ENCODE measurements at regions of chr3 and their contacts with region 1.

Region 1: GRCh38 chr3:182238126-182238525 is 526.4 kb downstream of the SOX2 start:
- DNase-seq: peak; percentile 37
- H3K4me3 ChIP-seq: no peak overlapping the region
- CTCF ChIP-seq: no peak

Region 2: DNA sequence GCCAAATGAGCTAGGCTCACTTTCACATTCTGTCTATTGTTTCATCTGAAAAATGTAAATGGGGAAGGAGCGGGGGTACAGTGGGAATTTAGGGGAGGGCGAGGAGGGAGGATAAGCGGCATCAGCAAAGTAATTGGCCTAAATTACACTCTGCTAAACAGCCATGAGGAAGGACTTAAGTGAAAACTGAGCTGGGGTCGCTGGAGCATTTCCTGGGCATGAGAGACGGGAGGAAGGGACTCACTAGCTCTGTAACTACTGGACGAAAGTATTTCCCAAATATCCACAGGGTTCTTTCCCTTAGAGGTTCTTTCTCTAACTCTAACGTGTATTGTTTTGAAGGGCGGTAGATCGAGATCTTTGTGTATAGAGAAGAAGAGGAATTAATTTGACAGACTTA is 108.4 kb before region 1 on chr3:
- in situ Hi-C with region 1: loop called (anchors 5 kb)
- DNase-seq: no peak
- H3K4me3 ChIP-seq: no peak overlapping the region
- CTCF ChIP-seq: no peak

Region 3: GRCh38 chr3:182139627-182140357 is 98.3 kb before region 1 on chr3:
- in situ Hi-C with region 1: no loop called
- DNase-seq: no peak
- H3K4me3 ChIP-seq: no peak overlapping the region
- CTCF ChIP-seq: no peak

Measured in astrocyte of the cerebellum (primary cell).